Mucosa of descending colon (tissue), 3 donors: ENCODE measurements at regions of chr3 and their contacts with region 1.

Region 1: DNA sequence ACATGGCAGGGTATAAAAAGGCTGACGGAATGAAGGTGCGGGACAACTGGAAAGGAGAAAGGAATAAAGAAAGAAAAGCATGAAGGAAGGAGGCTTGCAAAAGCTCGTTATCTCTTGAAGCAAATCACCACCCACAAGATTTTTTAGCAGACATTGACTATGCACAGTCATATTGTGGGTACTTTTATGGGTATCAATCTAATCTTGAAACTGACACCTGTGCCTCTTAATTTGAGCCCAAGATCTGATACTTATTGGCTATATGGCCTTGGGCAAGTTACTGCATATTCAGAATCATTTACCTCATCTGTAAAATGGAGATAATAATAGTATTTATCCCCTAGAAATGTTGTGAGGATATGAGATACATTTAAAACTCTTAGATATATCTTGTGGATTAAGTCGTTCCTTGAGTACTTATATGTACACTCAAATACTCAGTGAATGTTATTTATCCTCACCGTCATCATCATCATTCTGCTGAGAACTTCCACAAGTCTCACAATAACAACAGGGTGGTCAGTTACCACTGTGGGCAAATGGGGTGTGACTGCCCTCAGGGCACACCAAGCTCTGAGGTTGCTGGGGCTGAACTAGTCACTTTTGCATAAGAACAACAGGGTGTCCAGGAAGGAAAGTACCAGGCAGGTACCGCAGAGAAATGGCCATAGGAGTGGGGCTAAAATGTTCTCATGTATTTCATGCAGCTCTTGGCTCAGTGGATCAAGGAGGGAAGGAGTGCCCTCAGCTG is 266.1 kb downstream of the SLC9A9 start:
- DNase-seq: no peak
- ATAC-seq: no peak
- H3K4me3 ChIP-seq: no peak overlapping the region
- H3K4me1 ChIP-seq: peaks cover 17% of the 10 kb centered on the region
- CTCF ChIP-seq: no peak

Region 2: DNA sequence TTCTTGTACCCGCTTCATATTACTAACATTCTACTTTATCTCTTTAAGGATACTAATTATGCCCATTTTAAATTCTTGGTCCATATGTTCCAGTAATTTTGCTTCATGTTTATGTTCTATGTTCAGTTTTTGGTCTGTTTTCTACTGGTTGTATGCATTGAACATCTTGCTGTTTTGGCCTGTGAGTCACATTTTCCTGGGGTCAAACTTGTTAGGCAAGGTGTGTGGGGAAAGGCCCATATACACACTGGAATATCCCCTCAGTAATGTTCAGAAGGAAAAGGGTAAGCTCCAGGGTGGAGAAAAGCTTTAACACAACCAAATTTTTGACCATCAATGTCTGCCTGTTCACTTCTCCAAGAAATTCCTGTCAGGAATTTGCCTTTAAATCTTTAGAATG is 71.5 kb before region 1 on chr3:
- intact Hi-C with region 1: loop called in 1 of 2 experiments (anchors 5 kb)
- DNase-seq: no peak
- ATAC-seq: no peak
- H3K4me3 ChIP-seq: no peak overlapping the region
- H3K4me1 ChIP-seq: no peaks in the 10 kb centered on the region
- CTCF ChIP-seq: no peak